Panc1 (cell line): ENCODE measurements at regions of chr15 and their contacts with region 1.

Region 1: GRCh38 chr15:76614725-76615124 is 278.2 kb downstream of the ISL2 start:
- DNase-seq: no peak
- ATAC-seq: no peak
- H3K4me3 ChIP-seq: no peak overlapping the region
- H3K27ac ChIP-seq: no peak overlapping the region
- H3K4me1 ChIP-seq: no peaks in the 10 kb centered on the region
- H3K27me3 ChIP-seq: no peaks in the 10 kb centered on the region
- CTCF ChIP-seq: no peak

Region 2: DNA sequence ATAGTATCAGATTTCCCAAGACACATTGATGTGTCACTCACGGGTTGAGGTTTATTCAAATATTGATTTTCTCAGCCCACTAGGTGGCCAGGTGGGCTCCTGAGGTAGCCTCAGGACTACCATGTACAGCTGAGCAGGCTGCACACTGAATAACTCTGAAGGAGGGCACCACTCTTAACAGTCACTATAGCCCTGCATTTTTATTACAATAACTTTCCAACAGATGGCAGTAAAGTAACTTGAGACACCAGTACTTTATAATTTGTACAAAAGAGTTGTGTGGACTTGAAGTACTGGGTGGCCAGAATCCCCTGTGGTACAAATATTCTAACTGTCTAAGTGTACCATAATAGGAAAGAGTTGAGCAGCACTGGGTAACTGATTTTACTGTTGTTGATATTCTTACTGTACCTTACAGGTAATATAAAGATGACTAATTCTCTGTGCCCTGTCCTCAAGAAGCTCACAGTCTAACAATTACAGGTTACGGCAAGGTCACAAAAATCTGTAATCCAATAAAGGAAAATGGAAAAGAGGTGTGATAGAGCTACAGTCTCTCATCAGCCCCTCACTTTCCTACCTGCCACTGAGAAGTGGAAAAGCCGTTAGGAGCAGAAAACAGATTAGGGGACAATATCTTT is 379.4 kb before region 1 on chr15:
- CTCF ChIA-PET with region 1: no interaction called
- POLR2A ChIA-PET with region 1: no interaction called
- in situ Hi-C with region 1: no loop called
- intact Hi-C with region 1: no loop called
- DNase-seq: peak; percentile 17
- ATAC-seq: peak; percentile 96
- H3K4me3 ChIP-seq: no peak overlapping the region
- H3K27ac ChIP-seq: no peak overlapping the region
- H3K4me1 ChIP-seq: no peaks in the 10 kb centered on the region
- H3K27me3 ChIP-seq: no peaks in the 10 kb centered on the region
- CTCF ChIP-seq: peak; percentile 75

Region 3: DNA sequence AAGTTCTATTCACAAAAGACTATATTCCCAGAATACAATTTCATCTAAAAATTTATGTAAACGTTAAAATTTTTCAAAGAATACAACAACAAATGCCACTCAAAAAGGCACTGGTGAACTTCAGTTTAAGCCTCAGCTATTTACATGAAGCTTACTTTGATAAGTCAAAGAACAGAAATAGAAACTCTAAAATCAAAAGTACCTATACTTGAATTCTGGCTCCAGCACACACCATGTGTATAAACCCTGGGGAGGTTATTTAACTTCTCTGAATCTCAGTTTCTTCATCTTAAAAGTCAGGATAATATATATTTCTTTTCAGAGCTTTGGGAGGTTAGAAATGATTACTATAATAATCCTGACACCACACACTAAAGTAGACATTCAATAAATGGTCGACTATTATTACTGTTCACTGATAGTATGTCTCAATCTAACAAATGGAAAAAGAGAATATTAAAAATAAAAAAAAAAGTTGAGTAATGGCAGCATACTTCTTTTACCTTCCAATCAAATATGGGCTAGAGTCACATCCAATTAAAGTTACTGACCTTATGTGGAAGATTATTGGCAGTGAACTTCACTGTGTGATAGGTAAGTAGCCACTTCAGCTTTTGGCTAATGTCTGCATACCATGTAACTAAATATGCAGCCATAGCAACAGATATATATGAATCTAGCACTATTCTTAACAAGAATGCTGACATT is 29.7 kb before region 1 on chr15:
- CTCF ChIA-PET with region 1: no interaction called
- POLR2A ChIA-PET with region 1: no interaction called
- in situ Hi-C with region 1: no loop called
- intact Hi-C with region 1: loop called (anchors 5 kb)
- DNase-seq: no peak
- ATAC-seq: no peak
- H3K4me3 ChIP-seq: no peak overlapping the region
- H3K27ac ChIP-seq: no peak overlapping the region
- H3K4me1 ChIP-seq: no peaks in the 10 kb centered on the region
- H3K27me3 ChIP-seq: no peaks in the 10 kb centered on the region
- CTCF ChIP-seq: no peak

Region 4: GRCh38 chr15:76682259-76682658 is 67.5 kb after region 1 on chr15:
- CTCF ChIA-PET with region 1: no interaction called
- POLR2A ChIA-PET with region 1: no interaction called
- in situ Hi-C with region 1: no loop called
- intact Hi-C with region 1: no loop called
- DNase-seq: no peak
- ATAC-seq: no peak
- H3K4me3 ChIP-seq: no peak overlapping the region
- H3K27ac ChIP-seq: no peak overlapping the region
- H3K4me1 ChIP-seq: no peaks in the 10 kb centered on the region
- H3K27me3 ChIP-seq: no peaks in the 10 kb centered on the region
- CTCF ChIP-seq: no peak